ENCODE measurements at regions of chr20 and their contacts with region 1.

Region 1: GRCh38 chr20:35146920-35147574 is at the start of gene EDEM2:
- DNase-seq: peak; percentile 99
- H3K27ac ChIP-seq: peak within 1 kb of the TSS; percentile 80
- CTCF ChIP-seq: 0 out of 2 replicates have a peak, but pooled peaks have one; percentile 5

Region 2: GRCh38 chr20:34185766-34186620 is 961.1 kb before region 1 on chr20:
- CTCF ChIA-PET with region 1: no interaction called
- POLR2A ChIA-PET with region 1: no interaction called
- DNase-seq: no peak
- H3K27ac ChIP-seq: no peak overlapping the region
- CTCF ChIP-seq: no peak

Region 3: DNA sequence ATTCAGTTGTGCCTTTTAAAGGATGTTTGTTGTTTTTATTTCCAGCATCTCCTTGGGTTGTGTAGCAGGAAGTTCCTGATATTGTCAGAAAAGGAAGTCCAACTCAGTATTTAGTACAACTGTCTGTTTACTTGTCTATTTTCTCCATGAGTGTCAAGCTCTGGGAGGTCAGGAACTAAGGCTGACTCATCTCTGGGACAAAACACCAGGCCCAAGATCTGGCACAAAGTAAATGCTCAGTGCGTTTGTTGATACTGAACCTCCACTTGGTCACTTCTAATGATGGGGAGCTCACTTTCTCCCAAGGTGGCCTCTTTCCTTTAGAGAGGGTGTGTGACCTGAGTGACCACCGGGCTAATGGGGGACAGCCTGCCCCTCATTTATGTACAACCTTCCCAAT is 457.6 kb before region 1 on chr20:
- CTCF ChIA-PET with region 1: no interaction called
- POLR2A ChIA-PET with region 1: no interaction called
- DNase-seq: no peak
- H3K27ac ChIP-seq: no peak overlapping the region
- CTCF ChIP-seq: no peak

Region 4: DNA sequence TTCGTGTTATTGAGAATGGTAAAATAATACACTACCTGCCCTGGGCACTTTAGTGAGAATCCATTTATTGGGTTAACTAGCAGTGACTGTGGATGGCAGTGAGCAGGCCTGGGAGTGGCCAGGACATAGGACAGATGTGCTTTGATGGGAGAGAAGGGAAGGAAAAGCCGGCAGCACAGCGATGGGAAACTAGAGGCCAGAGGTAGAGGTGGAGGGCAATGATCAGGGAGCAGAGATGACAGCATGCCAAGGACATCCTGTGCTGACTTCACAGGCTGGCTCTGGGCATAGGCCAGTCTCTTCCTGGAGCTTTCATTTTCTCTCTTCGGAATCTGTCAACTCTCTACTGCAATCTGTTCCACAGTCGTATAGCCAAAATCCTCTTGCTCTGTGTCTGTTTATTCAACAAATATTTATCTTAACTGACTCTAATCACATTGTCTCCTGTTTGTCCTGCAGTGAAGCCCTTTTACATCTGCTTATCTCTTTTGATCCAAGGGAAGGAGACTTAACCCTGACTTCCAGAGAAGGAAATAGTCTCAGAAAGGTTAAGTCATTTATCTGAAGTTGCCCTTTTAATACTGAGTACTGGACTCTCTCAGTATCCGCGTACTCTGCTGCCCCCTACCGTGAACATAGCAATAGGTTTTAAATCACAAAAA is 61.0 kb after region 1 on chr20:
- CTCF ChIA-PET with region 1: interaction called, 59 read pairs
- POLR2A ChIA-PET with region 1: interaction called, 4 read pairs
- DNase-seq: peak; percentile 79
- H3K27ac ChIP-seq: peak overlapping the region; percentile 69
- CTCF ChIP-seq: peak; percentile 95

Region 5: GRCh38 chr20:35269055-35269781 is 122.2 kb after region 1 on chr20:
- CTCF ChIA-PET with region 1: interaction called, 21 read pairs
- POLR2A ChIA-PET with region 1: interaction called, 3 read pairs
- DNase-seq: peak; percentile 80
- H3K27ac ChIP-seq: peak overlapping the region; percentile 9
- CTCF ChIP-seq: peak; percentile 93